A673 (cell line): ENCODE measurements at regions of chr3 and their contacts with region 1.

Region 1: DNA sequence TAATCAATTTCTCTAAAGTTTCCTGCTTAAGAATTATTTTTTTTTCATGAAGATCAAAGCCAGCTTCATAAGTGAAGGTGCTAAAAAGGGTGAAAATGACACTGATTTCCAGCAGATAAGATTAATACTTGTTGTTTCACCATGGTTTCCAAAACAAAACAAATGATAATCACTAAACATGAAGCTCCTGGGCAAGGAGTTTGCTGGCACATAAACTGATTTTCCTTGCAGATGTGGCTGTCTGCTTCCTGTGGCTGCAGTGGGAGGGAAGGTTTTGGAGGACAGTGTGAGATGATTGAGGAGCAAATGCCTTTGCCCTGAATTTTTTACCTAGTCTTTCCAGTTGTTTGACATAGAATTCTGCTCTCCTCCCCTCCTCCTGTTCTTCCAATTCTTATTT is 228.8 kb downstream of the DIPK2A start:
- DNase-seq: no peak
- H3K4me3 ChIP-seq: no peak overlapping the region
- H3K27ac ChIP-seq: no peak overlapping the region
- H3K4me1 ChIP-seq: no peaks in the 10 kb centered on the region
- H3K27me3 ChIP-seq: no peaks in the 10 kb centered on the region
- CTCF ChIP-seq: no peak

Region 2: DNA sequence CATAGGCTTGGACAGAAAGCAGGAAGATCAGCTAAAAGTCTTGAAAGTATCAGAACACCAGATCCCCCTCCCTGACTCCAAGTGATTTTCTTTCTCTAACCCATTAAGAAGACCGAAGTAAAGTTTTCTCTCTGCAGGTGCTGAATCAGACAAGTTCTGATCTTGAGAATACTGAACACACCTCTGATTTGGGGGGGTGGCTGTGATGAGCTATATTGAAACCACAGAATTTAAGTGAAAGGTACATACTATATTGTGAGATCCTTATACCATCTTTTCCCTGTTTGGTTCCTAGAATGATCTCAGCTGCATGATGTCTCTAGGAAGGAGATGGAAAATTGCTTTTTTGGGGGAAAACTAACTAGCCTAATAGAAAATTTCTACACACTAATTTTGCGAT is 32.8 kb before region 1 on chr3:
- CTCF ChIA-PET with region 1: no interaction called
- POLR2A ChIA-PET with region 1: no interaction called
- intact Hi-C with region 1: loop called (anchors 1 kb)
- DNase-seq: no peak
- H3K4me3 ChIP-seq: no peak overlapping the region
- H3K27ac ChIP-seq: no peak overlapping the region
- H3K4me1 ChIP-seq: peaks cover 7% of the 10 kb centered on the region
- H3K27me3 ChIP-seq: no peaks in the 10 kb centered on the region
- CTCF ChIP-seq: no peak

Region 3: DNA sequence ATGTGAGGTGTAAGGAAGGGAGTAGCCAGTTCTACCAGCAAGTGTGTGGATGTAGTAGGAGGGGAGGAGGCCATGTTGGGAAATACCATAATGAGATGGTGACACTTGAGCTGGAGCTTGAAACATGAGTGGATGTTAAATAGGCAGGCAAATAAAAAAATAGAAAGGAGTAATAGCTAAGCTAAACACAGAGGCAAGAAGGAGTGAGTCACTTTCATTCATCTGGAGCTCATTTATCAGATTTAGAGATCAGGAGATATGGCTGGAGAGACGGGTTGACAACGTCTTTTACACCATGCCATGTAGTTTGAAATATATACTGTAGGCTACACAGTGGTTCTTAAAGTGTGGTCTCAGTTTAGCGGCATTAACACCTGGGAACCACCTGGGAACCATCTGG is 161.7 kb after region 1 on chr3:
- CTCF ChIA-PET with region 1: no interaction called
- POLR2A ChIA-PET with region 1: no interaction called
- intact Hi-C with region 1: no loop called
- DNase-seq: peak; percentile 67
- H3K4me3 ChIP-seq: no peak overlapping the region
- H3K27ac ChIP-seq: no peak overlapping the region
- H3K4me1 ChIP-seq: no peaks in the 10 kb centered on the region
- H3K27me3 ChIP-seq: no peaks in the 10 kb centered on the region
- CTCF ChIP-seq: no peak

Region 4: GRCh38 chr3:144516026-144516425 is 315.6 kb after region 1 on chr3:
- CTCF ChIA-PET with region 1: no interaction called
- POLR2A ChIA-PET with region 1: no interaction called
- intact Hi-C with region 1: no loop called
- DNase-seq: no peak
- H3K4me3 ChIP-seq: no peak overlapping the region
- H3K27ac ChIP-seq: no peak overlapping the region
- H3K4me1 ChIP-seq: no peaks in the 10 kb centered on the region
- H3K27me3 ChIP-seq: no peaks in the 10 kb centered on the region
- CTCF ChIP-seq: no peak